Activated CD4-positive, alpha-beta T cell treated with anti-CD3 and anti-CD28 coated beads, Interleukin-2, amount 10 ng/mL, durations not matched to agents 24 days and 14 days (primary cell): ENCODE measurements at regions of chr19 and their contacts with region 1.

Region 1: DNA sequence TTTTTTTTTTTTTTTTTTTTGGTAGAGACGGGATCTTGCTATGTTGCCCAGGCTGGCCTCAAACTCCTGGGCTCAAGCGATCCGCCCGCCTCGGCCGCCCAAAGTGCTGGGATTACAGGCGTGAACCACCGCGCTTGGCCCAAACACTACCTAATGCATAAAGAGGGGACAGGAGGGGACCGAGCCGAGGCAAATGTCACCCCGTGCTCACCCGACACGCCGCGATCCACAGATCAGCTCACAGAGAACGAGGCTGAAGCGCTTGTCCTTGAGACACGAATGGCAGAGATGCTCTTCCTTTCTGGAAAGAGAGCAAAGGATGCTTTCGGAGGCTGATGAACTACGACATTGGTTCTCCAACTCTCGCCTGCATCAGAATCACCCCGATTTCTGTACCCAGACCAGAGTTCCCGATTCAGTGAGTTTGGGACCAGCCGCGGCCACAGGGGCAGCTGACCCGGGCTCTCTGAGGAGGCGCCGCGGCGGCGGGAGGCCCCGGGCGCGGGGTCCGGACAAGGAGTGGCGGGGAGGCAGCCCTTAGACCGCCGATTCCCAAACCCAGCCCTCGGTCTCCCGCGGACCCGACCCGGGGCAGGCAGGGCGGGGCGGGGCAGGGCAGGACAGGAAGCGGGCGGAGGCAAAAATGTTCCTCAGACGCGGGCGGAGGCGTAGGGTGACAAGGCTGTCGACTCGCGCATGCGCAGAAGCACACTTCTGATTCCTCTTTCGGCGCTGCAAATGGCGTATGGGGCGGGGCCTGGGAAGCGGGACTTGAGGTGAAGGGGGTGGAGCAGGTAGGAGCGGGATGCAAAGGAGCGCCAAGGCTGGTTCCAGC is at the start of gene ZNF699:
- DNase-seq: peak; percentile 99
- H3K4me3 Mint-ChIP-seq: peak within 1 kb of the TSS; percentile 96
- H3K27ac Mint-ChIP-seq: peak within 1 kb of the TSS; percentile 94
- H3K4me1 Mint-ChIP-seq: peaks cover 14% of the 10 kb centered on the region
- H3K27me3 Mint-ChIP-seq: no peaks in the 10 kb centered on the region
- total RNA-seq, gene ZNF699: 4.4 and 4.5 TPM in 2 replicates

Region 2: DNA sequence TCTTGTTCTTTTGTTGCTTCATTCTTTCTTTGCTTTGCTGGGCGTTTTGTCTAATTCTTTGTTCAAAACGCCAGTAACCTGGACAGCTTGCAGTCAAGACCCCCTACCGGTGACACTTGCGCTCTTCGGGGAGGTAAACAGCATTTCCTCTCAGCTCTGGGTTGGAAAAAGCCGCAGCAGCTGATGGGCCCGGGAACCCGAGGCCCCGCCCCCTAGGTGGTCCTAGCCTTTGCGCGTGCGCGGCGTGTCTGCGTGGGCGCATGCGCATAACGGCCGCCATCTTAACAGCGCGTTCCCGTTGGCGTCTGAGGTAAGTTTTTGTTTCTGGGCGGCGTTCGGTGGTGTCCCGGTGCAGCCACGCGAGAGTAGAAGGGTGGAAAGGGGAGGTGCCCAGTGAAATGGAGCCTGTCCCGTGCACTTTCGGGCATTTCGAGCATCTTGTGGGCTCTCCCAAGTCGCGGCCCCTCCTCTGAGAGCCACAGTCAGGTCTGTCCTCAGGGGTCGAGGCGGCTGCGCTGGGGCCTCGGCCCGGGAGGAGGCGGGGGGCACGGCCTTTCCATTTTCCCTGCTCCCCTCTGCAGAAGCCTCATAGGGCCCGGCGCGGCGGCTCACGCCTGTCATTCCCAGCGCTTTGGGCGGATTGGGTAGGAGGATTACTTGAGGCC is 14.7 kb after region 1 on chr19 and contains the start of gene ZNF559:
- intact Hi-C with region 1: loop called (anchors 1 kb)
- DNase-seq: peak; percentile 98
- H3K4me3 Mint-ChIP-seq: peak within 1 kb of the TSS; percentile 93
- H3K27ac Mint-ChIP-seq: peak within 1 kb of the TSS; percentile 94
- H3K4me1 Mint-ChIP-seq: peaks cover 9% of the 10 kb centered on the region
- H3K27me3 Mint-ChIP-seq: no peaks in the 10 kb centered on the region
- total RNA-seq, gene ZNF559: 8.2 and 9.5 TPM in 2 replicates

Region 3: DNA sequence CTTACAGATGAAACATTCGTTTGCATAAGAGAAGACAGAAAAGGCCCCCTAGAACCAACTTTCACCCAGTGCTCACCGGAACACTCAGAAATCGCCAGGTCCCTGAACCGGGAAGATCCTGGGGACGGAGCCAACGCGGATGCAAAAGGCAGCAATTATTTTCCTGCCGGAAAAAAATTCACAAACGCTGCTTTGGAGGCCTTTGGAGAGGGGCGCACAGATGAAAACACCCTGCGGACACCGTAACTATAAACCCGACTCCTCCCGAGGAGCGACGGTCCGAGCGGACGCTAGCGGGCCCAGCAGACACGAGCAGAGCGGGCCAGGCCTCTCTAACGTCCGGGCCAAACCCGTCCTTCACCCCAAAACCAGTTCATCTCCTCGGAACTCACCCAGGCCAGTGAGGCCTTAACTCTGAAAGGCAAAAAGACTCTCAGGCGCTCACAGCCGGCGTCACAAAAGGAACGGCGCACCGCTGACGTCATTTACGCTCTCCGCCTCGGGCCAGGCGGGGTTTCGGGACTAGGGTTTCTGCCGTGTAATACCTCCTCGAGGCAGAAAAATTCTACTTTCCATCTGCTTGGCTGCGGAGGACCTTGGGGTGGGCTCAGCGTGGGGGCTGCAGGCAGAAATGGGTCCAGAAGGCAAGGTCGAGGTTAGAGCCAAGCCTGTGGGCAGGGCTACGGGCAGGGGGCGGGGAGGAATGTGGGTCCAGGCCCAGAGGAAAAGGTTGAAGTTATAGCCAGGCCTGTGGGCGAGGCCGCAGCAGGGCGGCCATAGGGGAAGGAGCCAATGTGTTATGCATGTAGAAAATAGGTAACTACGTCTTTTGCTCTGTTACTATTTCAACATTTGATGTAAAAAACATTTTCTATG is 229.1 kb after region 1 on chr19 and contains the start of gene ZNF426:
- intact Hi-C with region 1: loop called (anchors 5 kb)
- DNase-seq: peak; percentile 95
- H3K4me3 Mint-ChIP-seq: peak within 1 kb of the TSS; percentile 97
- H3K27ac Mint-ChIP-seq: peak within 1 kb of the TSS; percentile 92
- H3K4me1 Mint-ChIP-seq: peaks cover 8% of the 10 kb centered on the region
- H3K27me3 Mint-ChIP-seq: no peaks in the 10 kb centered on the region
- total RNA-seq, gene ZNF426: 9.7 and 10.9 TPM in 2 replicates